ENCODE measurements at regions of chr16 and their contacts with region 1.

Region 1: DNA sequence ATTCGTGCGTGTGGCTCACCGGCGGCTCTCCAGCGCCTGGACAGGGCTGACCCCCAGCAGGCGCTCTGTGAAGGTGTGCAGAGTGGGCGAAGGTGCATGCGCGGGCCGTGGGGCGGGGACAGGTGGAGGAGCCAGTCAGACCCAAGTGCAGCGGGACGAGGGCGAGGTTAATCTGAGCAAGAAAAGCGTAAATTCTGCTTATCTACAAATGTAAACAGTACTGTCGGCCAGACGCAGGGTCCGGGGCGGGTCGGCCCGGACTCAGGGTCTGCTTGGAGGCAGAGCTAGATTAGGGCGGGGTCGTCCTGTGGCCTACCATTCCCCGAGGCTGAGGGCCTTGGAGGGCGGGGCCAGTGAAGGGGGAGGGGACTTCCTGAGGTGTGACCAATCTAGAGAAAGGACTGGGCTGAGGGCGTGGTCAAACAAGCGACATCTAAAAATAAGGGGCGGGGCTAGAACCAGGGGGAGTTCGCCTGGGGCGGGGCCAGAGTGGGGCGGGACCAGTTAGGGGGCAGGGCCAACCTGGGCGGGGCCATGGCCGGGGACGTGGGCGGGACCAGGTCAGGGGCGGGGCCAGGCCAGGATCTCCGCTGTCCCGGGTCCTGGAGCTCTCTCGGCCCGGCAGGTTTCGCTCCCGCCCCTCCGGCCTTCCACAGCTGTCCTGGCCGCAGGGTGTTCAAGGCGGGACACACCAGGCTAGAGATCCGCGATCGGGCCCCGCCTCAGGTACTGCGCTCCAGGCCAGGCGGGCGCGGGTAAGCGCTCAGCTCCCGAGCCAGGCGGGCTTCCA is at the start of gene SEC14L5:
- DNase-seq: peak; percentile 98 to 99
- ATAC-seq: peak; percentile 82 to 92
- H3K4me3 ChIP-seq: peak within 1 kb of the TSS; percentile 49
- H3K27ac ChIP-seq: peak within 1 kb of the TSS; percentile 8 to 54; a peak in 4 of 6 replicates
- H3K4me1 ChIP-seq: peaks cover 4% of the 10 kb centered on the region; the same call in 1 of the 3 replicates
- CTCF ChIP-seq: no peak
- EP300 ChIP-seq: no peak
- POLR2A ChIP-seq: no peak
- RAD21 ChIP-seq: no peak
- polyA plus RNA-seq, gene SEC14L5: 0.05 and 0.07 TPM in 2 replicates

Region 2: DNA sequence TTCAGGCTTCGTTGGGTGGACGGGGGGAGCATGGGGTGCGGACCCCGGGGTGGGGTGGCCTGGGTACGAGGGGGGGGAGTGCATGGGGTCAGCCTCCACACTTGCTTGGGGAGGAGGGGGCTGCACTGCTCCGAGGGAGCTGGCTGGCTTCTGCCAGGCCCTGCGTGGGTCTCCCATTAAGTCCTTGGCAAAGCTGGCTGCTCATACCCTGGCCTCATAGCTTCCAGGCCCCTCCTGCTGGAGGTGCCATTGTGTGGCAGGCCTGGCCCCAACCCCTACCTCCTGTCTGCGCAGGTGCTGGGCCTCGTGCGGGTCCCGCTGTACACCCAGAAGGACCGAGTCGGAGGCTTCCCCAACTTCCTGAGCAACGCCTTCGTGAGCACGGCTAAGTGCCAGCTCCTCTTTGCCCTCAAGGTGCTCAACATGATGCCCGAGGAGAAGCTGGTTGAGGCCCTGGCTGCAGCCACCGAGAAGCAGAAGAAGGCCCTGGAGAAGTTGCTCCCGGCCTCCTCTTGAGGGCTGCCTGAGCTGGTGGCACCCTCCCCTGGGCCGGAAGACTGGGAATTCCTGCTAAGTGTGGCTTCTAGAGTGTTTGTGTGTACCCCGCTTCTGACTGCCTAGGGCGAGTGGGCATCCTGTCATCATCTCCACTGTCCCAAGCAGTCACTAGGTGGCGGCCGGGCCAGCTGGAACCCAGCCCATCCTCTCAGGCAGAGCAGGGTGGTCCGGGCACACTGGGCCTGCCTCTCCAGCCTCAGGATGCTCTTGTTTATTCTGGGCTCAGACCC is 263.1 kb before region 1 on chr16:
- CTCF ChIA-PET with region 1: interaction called, 12 read pairs
- POLR2A ChIA-PET with region 1: interaction called, 3 read pairs
- DNase-seq: no peak
- ATAC-seq: peak in 1 of 2 experiments; percentile 1; a peak in 1 of 6 replicates
- H3K4me3 ChIP-seq: peak overlapping the region; percentile 93; the same call in 2 of the 3 replicates
- H3K27ac ChIP-seq: peak overlapping the region; percentile 88 to 92; a peak in 5 of 6 replicates
- H3K4me1 ChIP-seq: peaks cover 11% of the 10 kb centered on the region; the same call in 1 of the 3 replicates
- CTCF ChIP-seq: no peak
- EP300 ChIP-seq: no peak
- POLR2A ChIP-seq: no peak
- RAD21 ChIP-seq: no peak

Region 3: DNA sequence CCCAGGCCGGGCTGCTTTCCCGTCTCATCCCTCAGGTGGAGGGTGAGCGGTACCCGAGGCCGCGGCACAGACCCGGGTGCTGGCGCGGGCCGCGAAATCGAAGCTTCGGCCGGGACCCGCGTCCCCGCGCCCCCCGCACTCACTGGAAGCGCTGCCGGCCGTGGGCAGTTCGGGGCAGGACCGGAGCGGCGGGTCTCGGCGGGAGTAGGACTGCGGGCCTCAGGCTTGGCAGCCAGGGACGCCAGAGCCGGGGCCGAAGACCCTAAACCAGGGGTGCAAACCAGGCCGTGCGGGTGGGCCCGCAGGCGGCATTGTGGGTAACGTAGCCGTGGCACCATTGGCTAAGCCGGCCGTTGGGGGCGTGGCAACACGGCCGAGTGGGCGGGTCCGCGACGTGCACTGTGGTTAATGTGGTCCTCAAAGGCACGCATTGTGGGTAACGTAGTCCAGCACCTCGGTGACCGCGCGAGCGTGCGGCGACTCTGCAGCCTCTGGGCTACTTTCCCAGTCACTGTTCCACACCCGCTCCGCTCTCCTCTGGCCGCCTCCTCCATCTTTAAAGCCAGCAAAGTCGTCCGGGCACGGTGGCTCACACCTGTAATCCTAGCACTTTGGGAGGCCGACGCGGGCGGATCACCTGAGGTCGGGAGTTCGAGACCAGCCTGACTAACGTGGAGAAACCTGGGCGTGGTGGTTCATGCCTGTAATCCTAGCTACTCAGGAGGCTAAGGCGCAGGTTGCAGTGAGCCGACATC is 190.9 kb before region 1 on chr16 and contains the start of gene ZNF500:
- CTCF ChIA-PET with region 1: interaction called, 13 read pairs
- POLR2A ChIA-PET with region 1: interaction called, 3 read pairs
- DNase-seq: peak; percentile 96 to 97
- ATAC-seq: peak; percentile 86 to 94
- H3K4me3 ChIP-seq: peak within 1 kb of the TSS; percentile 81
- H3K27ac ChIP-seq: peak within 1 kb of the TSS; percentile 84 to 98
- H3K4me1 ChIP-seq: peaks cover 17% of the 10 kb centered on the region; the same call in 2 of the 3 replicates
- CTCF ChIP-seq: no peak
- EP300 ChIP-seq: no peak
- POLR2A ChIP-seq: peak; percentile 75
- RAD21 ChIP-seq: no peak
- polyA plus RNA-seq, gene ZNF500: 4.6 and 4.7 TPM in 2 replicates

Region 4: DNA sequence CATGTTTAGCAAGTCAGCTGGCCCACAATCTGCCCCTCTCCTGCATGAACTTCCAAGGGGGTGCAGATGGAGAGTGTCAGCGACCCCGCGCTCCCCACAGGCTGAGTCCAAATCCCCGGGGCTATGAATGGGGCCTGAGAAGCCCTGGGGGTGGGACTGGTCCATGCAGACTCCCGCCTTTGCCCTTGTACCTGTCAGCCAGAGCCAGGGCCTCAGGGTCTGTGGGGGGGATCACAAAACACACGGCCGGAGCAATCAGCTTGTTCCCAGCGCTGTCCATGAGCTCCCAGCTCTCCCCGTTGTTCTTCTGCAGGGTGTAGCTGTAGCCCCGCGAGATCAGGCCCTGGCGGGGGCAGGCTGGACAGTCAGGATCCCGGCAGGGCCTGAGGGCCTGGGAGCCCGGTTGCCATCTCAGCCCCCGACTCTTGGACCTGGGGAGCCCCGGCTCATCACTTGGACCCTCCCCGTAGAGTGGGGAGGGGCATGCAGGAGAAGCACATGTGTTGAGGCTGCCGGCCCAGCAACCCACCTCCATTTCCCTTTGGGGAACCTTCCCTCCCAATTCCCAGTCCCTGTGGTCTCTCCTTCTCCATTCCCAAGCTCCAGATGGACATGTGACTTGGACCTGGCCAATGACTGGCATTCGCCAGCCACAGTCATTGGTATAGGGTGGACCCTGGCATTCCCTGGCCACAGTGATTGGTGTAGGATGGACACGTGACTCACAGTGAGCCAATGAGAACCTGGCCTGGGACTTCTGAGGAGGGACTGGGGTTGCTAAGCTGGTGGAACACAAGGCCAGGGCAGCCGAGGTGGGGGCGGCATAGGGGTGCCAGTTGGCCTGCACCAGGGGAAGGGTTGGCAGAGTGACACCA is 63.4 kb before region 1 on chr16:
- CTCF ChIA-PET with region 1: interaction called, 11 read pairs
- POLR2A ChIA-PET with region 1: no interaction called
- DNase-seq: peak; percentile 36 to 39
- ATAC-seq: peak in 1 of 2 experiments; percentile 79; a peak in 3 of 6 replicates
- H3K4me3 ChIP-seq: no peak overlapping the region
- H3K27ac ChIP-seq: no peak overlapping the region
- H3K4me1 ChIP-seq: no peaks in the 10 kb centered on the region
- CTCF ChIP-seq: no peak
- EP300 ChIP-seq: no peak
- POLR2A ChIP-seq: no peak
- RAD21 ChIP-seq: no peak

Region 5: DNA sequence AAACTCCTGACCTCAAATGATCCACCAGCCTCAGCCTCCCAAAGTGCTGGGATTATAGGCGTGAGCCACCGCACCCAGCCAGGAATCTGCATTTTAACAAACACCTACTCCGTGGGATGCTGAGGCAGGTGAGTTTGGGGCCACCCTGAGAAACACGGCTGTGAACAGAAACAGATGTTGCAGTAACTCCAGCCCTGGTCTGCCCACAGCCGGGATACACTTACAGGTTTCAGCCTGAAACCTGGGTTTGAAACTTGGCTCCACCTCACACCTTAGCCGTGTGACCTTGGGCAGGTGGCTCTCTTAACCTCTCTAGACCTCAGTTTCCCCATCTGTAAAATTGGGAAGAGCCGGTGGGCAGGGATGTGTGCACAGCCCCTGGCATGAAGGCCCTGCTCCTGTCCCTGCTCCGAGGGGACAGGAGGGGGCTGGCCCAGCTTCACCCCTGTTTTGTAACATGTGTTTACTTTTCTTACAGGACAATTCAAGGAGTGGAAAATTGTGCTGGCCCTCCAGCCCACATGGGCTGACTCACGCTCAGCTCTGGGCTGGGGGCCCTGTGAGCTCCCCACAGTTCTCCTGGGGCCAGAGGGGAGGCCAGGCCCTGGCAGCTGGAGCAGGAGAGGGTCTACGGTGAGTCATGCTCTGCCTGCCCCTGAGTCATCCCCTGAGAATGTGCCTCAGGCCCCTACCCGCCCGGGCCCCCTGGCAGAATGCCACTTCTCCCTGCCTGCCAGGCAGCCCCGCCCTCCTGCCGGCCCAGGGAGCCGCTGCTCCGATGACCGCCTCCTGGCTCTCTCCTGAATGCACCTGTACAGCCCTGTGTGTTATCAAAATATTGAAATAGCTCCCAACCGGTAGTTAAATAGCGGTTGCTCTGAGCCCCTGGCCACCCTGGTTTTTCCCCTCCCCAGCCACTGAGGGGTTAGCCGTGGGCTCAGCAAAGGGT is 13.3 kb before region 1 on chr16:
- CTCF ChIA-PET with region 1: interaction called, 21 read pairs
- POLR2A ChIA-PET with region 1: no interaction called
- DNase-seq: peak; percentile 89 to 94
- ATAC-seq: peak; percentile 77 to 86
- H3K4me3 ChIP-seq: no peak overlapping the region
- H3K27ac ChIP-seq: peak overlapping the region; percentile 88 to 92
- H3K4me1 ChIP-seq: peaks cover 59% of the 10 kb centered on the region
- CTCF ChIP-seq: no peak
- EP300 ChIP-seq: peak; percentile 57 to 76; a peak in 2 of 5 replicates
- POLR2A ChIP-seq: no peak
- RAD21 ChIP-seq: peak; percentile 16 to 53; a peak in 2 of 5 replicates

Region 6: DNA sequence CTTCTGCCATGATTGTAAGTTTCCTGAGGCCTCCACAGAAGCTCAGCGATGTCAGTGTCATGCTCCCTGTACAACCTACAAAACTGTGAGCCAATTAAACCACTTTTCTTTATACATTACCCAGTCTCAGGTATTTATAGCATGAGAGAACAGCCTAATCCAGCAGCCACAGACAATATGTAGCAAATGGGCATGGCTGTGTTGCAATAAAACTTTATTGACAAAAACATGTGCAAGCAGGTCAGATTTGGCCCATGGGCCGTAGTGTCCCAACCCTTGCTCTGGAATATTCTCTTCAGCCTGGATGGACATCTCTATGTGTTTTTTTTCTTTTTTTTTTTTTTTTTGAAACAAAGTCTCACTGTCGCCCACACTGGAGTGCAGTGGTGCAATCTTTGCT is 200.6 kb after region 1 on chr16:
- CTCF ChIA-PET with region 1: no interaction called
- POLR2A ChIA-PET with region 1: no interaction called
- DNase-seq: no peak
- ATAC-seq: no peak
- H3K4me3 ChIP-seq: no peak overlapping the region
- H3K27ac ChIP-seq: no peak overlapping the region
- H3K4me1 ChIP-seq: no peaks in the 10 kb centered on the region
- CTCF ChIP-seq: no peak
- EP300 ChIP-seq: no peak
- POLR2A ChIP-seq: no peak
- RAD21 ChIP-seq: no peak

Measured in A549 (cell line).